Aorta (tissue), 5 donors: ENCODE measurements at regions of chr11 and their contacts with region 1.

Region 1: DNA sequence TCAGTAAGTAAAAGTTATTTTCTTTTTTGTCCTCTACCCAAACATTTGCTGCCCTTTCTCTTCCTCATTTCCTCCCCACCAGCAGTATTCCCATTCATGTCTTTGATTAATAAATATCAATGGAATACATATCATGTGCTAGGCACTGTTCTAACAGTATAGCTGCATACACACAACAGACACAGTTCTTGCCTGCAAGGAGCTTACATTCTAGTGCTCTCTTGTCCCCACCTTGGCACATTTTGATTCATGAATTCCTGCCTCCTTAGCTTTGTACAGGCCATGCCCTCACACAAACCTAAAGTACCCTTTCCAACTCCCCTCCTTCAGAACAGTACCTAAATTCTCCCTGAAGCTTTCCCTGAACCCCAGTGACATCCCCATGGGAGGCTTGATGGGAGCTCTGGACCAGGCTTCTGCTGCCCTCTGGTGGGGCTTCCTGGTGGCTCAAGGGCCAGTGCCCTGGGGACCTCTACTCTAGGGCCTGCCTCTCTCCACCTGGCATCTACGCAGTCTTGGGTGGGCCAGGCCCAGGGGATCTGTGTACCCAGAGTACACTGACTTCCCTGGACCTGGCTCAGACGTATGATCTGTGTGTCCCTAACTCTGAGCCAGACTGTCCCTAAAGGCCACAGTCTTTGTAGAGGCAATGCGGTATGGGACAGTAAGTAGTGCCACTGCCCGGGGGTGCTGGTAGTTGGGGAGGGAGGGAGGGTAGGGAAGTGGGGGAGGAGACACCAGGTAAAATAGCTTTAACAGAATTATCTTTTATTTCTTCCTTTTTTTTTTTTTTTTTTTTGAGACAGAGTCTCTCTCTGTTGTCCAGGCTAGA is 14.1 kb downstream of the RPS13 start:
- DNase-seq: peak in 1 of 2 donors; percentile 81
- ATAC-seq: peak; percentile 74
- H3K4me3 ChIP-seq: no peak overlapping the region
- H3K27ac ChIP-seq: no peak overlapping the region
- H3K4me1 ChIP-seq: no peaks in the 10 kb centered on the region
- H3K27me3 ChIP-seq: no peaks in the 10 kb centered on the region

Region 2: DNA sequence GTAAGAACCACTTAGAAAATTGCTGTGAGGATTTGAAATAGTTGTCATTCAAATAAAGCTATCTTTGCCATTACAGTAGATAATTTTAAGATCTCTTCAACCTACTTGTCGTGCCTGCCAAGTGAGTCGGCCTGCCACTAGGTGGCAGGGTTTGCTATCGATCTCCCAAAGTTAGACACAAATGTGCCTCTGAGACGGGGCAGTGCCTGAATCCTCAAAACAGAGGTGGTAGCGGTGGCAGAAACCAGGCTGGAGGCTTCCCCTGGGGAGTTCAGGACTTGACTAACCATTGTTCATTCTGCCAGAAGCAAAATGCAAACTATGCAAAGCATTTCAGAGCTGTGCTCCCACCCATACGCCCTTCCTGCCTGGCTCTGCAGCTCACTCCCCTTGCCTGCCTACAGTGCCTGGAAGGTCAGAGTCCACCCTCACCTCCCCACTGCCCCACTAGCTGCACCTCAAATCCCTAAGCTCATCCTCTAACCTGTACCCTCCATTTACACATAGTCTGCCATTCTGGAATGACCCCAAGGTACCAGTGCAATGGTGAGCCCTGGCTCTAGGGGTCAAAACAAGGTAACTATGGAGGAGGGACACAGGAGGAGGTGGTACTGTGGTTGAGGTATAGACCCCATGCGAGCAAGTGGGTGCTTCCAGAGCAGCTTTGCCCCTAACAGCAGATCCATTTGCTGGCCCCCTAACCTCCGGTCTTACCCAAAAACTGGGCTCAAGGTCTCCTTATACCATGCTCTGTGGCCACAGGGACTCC is 242.9 kb before region 1 on chr11:
- intact Hi-C with region 1: loop called in 1 of 2 experiments (anchors 10 kb)
- DNase-seq: peak; percentile 87 to 91
- ATAC-seq: peak; percentile 79
- H3K4me3 ChIP-seq: no peak overlapping the region
- H3K27ac ChIP-seq: no peak overlapping the region
- H3K4me1 ChIP-seq: no peaks in the 10 kb centered on the region
- H3K27me3 ChIP-seq: no peaks in the 10 kb centered on the region

Region 3: DNA sequence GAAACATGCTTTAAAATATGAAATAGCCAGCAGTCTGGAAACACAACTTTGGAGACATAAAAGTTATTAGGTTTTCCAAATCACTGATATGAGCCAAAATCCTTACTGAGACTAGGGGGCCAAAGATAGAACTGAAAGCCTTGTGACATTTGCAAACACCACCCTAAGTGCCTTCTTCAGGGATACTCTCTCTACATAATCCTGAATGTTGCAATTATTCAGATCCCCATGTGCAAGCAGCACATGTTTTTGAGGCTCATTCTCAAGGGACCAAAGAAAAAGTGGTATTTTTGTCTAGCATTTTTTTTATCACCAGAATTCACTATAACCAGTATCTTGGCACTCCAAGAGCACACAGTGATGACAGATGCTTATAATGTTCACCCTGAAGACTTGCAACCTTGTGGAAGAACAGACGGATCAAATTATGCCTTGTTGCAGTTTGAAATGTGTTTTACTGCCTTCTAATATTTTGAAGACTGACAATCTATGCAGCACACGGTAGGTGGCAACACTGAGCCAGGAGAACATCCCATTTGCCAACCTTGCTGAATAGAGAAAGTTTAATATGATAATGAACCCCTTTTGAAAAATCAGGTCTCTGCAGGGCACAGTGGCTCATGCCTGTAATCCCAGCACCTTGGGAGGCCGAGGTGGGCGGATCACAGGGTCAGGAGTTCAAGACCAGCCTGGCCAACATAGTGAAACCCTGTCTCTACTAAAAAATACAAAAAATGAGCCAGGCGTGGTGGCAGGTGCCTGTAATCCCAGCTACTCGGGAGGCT is 127.7 kb before region 1 on chr11:
- intact Hi-C with region 1: loop called (anchors 10 kb)
- DNase-seq: no peak
- ATAC-seq: peak; percentile 52
- H3K4me3 ChIP-seq: no peak overlapping the region
- H3K27ac ChIP-seq: no peak overlapping the region
- H3K4me1 ChIP-seq: peaks cover 2 to 7% of the 10 kb centered on the region in 2 donors
- H3K27me3 ChIP-seq: no peaks in the 10 kb centered on the region